Testis (tissue), 5 donors: ENCODE measurements at regions of chr15 and their contacts with region 1.

Region 1: GRCh38 chr15:100338971-100339444 is 2.8 kb downstream of the ADAMTS17 start:
- DNase-seq: peak; percentile 87
- H3K4me3 ChIP-seq: no peak overlapping the region
- H3K27ac ChIP-seq: no peak overlapping the region
- H3K4me1 ChIP-seq: no peaks in the 10 kb centered on the region
- H3K27me3 ChIP-seq: no peaks in the 10 kb centered on the region
- CTCF ChIP-seq: peak; percentile 57 to 79 (median 65)
- POLR2A ChIP-seq: no peak

Region 2: GRCh38 chr15:99931703-99932603 is 407.1 kb before region 1 on chr15:
- intact Hi-C with region 1: loop called (anchors 5 kb)
- DNase-seq: no peak
- H3K4me3 ChIP-seq: no peak overlapping the region
- H3K27ac ChIP-seq: no peak overlapping the region
- H3K4me1 ChIP-seq: peaks cover 4% of the 10 kb centered on the region
- H3K27me3 ChIP-seq: no peaks in the 10 kb centered on the region
- CTCF ChIP-seq: no peak
- POLR2A ChIP-seq: no peak

Region 3: DNA sequence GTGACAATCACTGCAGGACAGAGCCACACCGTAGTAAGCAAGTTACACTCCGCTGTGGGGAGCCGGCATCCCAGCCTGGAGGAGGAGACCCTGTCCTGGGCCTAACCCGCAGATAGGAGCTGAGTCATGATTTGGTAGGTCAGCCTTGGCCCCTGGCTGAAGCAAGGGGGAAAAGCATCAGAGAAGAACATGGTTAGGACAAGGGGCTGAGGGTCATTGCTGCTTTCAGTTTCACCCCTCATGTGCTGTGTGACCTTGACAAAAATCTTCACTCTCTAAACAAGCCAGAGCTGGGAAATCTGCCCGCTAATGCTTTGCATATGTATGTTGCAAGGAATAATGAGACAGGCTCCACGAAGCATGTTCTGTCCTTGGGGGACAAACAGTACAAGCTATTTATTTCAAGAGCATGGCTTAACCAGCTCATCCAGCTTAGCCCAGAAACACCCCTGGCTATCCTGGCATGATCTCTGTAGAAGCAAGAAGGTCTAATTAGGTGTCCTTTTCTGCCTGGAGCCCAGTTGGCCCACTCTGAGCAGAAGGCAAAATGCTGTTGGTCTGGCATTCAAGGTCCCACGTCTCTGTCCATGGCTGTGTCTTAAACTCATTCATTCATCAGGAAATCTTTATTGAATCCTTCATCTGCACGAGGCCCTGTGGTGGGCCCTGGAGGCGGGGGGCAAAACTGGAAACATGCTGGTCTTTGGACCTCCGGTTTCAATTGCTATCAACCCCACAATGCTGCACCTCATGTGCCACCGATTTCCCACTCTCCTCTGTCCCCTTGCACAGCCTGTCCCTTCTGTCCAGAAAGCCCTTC is 384.4 kb before region 1 on chr15:
- intact Hi-C with region 1: loop called (anchors 10 kb)
- DNase-seq: peak; percentile 81
- H3K4me3 ChIP-seq: no peak overlapping the region
- H3K27ac ChIP-seq: no peak overlapping the region
- H3K4me1 ChIP-seq: no peaks in the 10 kb centered on the region
- H3K27me3 ChIP-seq: no peaks in the 10 kb centered on the region
- CTCF ChIP-seq: no peak
- POLR2A ChIP-seq: no peak

Region 4: DNA sequence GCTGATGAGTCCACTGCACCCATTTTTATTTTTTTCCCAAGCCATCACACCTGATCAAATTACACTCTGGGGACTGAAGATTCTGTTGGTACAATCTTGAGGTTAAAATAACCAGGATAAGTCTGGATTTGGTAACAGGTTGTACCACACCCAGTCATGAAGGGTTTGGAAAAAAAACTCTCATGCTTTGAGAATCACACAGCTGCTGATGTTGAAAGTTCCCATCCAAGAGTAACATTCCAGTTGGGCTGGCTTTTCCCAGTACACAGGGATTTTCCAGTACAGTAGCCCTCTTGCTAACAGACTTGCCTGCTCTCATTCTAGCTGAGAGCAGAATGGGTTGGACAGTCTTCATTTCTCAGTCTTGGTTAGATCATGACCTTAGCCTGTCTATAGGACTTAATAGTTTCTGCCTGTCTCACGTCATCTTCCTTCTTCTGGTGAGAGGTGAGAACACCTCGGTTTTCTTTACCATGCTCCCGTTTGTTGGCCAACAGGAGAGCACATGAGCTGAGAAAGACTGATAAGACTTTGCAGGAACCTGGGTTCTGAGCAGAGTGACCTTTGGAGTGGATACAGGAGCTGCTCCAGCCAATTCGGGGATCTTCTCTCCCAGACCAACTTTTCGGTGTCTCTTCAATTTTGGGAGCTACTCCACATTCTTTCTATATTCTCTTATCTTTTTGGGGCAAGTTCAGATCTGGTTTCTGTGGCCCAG is 305.7 kb before region 1 on chr15:
- intact Hi-C with region 1: no loop called
- DNase-seq: no peak
- H3K4me3 ChIP-seq: no peak overlapping the region
- H3K27ac ChIP-seq: no peak overlapping the region
- H3K4me1 ChIP-seq: no peaks in the 10 kb centered on the region
- H3K27me3 ChIP-seq: no peaks in the 10 kb centered on the region
- CTCF ChIP-seq: no peak
- POLR2A ChIP-seq: no peak

Region 5: GRCh38 chr15:101426881-101427280 is 1087.9 kb after region 1 on chr15:
- intact Hi-C with region 1: no loop called
- DNase-seq: no peak
- H3K4me3 ChIP-seq: no peak overlapping the region
- H3K27ac ChIP-seq: no peak overlapping the region
- H3K4me1 ChIP-seq: no peaks in the 10 kb centered on the region
- H3K27me3 ChIP-seq: no peaks in the 10 kb centered on the region
- CTCF ChIP-seq: no peak
- POLR2A ChIP-seq: no peak